Heart right ventricle (tissue), 16 donors: ENCODE measurements at regions of chr15 and their contacts with region 1.

Region 1: DNA sequence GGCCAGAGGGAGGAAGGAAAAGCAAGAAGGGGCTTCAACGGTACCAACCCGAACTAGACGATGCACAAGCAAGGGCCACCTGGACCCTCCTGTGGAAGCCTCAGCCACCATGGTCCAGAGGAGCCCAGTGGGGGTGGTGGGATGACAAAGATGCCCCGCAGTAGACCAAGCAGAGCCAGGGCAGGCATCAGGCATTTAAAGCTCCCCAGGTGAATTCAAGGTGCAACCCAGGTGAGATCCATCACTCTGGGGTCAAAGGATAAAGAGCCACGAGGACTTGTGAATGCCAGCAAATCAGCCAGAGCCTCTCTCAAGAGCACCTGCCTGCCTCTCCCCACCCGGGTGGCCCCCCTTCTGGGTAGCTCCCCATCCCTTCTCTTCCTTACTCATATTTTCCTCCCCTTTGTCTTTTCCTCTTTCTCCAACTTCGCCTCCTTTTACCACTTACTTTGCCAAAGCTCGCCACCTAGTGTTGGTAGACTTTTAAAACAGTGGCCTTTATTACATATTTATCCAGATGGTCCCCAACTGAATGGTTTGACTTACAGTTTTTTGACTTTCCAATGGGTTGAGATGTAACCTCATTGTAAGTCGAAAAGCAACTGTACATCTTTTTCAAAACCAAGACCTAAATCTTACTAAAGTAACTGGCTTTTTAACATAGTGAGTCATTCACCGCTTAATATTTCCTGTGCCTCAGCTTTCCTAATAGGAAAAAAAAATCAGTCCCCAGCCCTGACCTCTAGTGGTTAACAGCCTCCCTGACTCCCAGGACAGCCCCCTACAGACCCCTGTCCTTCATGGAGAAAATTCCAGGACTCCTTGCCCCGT is 18.8 kb downstream of the PLA2G4F start:
- DNase-seq: no peak
- ATAC-seq: peak in 3 of 8 donors; percentile 20 to 41 (median 33)
- H3K4me3 ChIP-seq: no peak overlapping the region
- H3K27ac ChIP-seq: no peak overlapping the region
- H3K4me1 ChIP-seq: peaks cover 0 to 4% (median 0%) of the 10 kb centered on the region in 9 donors
- H3K27me3 ChIP-seq: peaks cover 0 to 3% (median 0%) of the 10 kb centered on the region in 7 donors
- CTCF ChIP-seq: peak; percentile 37 to 68 (median 59)

Region 2: DNA sequence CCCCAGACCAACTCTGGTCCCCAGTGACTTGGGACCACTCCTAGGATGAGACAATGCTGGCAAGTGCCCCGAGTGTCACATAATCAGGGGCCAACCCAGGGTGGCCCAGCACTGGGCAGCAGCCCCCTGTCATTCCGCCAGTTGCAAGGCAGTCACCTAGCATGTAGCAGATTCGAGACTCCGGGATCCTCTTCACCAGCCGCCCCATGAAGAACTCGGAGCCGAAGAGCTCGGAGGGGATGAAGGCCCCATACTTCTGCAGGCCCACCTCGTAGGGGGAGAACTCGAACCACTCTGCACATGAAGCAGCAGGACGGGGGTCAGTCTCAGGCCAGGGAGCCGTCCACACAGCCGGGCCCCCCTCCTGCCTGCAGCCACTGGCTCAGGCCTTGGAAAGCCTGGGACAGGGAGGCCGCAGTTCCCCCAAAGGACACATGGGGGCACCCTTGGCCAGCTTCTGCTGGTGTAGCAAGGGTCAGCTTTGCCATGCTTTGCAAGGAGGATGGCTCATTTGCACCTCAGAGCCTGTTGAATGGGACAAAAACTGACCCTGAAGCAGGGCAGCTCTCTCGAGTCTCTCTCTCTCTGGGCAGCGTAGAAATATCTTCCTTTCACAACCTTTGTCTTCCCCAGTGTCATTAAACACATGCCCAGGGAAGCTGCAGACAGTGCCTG is 148.2 kb before region 1 on chr15:
- intact Hi-C with region 1: loop called in 8 of 10 experiments (anchors 2 to 10 kb)
- DNase-seq: peak; percentile 87 to 89
- ATAC-seq: peak; percentile 82 to 95 (median 90)
- H3K4me3 ChIP-seq: no peak overlapping the region
- H3K27ac ChIP-seq: no peak overlapping the region
- H3K4me1 ChIP-seq: peaks cover 0 to 9% (median 0%) of the 10 kb centered on the region in 9 donors
- H3K27me3 ChIP-seq: peaks cover 0 to 3% (median 0%) of the 10 kb centered on the region in 7 donors
- CTCF ChIP-seq: peak; percentile 97 to 99 (median 99)

Region 3: GRCh38 chr15:42065033-42065432 is 72.6 kb before region 1 on chr15:
- intact Hi-C with region 1: loop called in 9 of 10 experiments (anchors 1 to 10 kb)
- DNase-seq: peak in 1 of 2 donors; percentile 34
- ATAC-seq: peak in 5 of 8 donors; percentile 32 to 59 (median 37)
- H3K4me3 ChIP-seq: no peak overlapping the region
- H3K27ac ChIP-seq: no peak overlapping the region
- H3K4me1 ChIP-seq: peaks cover 0 to 11% (median 0%) of the 10 kb centered on the region in 9 donors
- H3K27me3 ChIP-seq: no peaks in the 10 kb centered on the region
- CTCF ChIP-seq: no peak

Region 4: GRCh38 chr15:42084460-42085235 is 53.0 kb before region 1 on chr15:
- intact Hi-C with region 1: loop called in 1 of 10 experiments (anchors 5 kb)
- DNase-seq: peak; percentile 45 to 73
- ATAC-seq: peak; percentile 71 to 88 (median 84)
- H3K4me3 ChIP-seq: no peak overlapping the region
- H3K27ac ChIP-seq: no peak overlapping the region
- H3K4me1 ChIP-seq: peaks cover 0 to 14% (median 2%) of the 10 kb centered on the region in 9 donors
- H3K27me3 ChIP-seq: peaks cover 0 to 25% (median 5%) of the 10 kb centered on the region in 7 donors
- CTCF ChIP-seq: peak; percentile 91 to 95 (median 94)